Naive thymus-derived CD4-positive, alpha-beta T cell (primary cell): ENCODE measurements at regions of chr4 and their contacts with region 1.

Region 1: DNA sequence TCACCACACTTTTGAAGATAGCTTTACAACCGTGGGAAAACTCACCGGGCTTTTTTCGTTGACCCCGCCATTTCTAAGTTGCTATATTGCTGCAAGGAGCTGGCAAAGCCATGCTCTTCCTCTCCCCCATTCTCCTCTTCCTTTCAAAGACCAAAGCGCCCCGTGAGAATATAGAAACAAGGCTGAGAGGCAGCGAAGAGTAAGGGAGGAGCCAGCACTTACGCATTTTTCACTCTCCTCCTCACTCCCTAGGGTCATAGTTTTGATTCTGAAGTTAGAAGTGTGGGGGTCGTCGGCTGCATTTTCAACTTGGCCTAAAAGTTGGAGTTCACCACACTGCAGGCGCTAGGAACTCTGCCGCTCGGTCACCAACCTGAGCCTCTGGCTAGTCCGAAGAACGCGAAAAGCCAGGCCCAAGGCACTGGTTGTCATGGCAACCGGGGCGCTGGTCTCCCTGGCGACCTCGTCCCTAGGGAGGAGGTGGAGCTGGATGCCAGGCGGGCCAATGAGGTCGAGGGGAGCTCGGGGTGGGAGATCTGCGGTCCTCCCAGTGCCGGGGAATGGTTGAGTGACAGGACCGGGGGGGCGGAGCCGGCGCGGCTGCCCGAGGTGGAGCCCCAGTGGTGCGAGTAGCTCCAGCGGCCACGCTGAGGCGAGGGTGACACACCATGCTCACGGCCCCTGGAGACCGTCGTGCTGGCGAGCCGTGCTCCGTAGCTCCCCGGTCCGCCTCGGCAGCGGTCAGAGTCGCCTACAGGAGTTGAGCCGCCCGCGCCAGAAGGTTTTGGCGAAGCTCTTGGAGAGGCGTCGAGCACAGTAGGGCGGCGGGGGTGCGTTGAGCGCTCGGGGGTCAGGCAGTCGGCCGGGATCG is at the start of gene PTPN13:
- DNase-seq: peak in 6 of 9 donors; percentile 7 to 62 (median 16)
- ATAC-seq: peak; percentile 86
- H3K4me3 ChIP-seq: peak within 1 kb of the TSS; percentile 30
- H3K4me3 Mint-ChIP-seq: peak within 1 kb of the TSS; percentile 59 to 83 (median 79)
- H3K27ac ChIP-seq: no peak within 1 kb of the TSS
- H3K27ac Mint-ChIP-seq: no peak within 1 kb of the TSS
- H3K4me1 ChIP-seq: no peaks in the 10 kb centered on the region
- H3K4me1 Mint-ChIP-seq: peaks cover 5 to 30% (median 17%) of the 10 kb centered on the region in 7 donors
- H3K27me3 ChIP-seq: peaks cover 0 to 9% of the 10 kb centered on the region in 2 donors
- H3K27me3 Mint-ChIP-seq: peaks cover 46 to 62% (median 52%) of the 10 kb centered on the region in 5 donors
- total RNA-seq, gene PTPN13: 0.05 to 4.5 (median 0.21) TPM in 4 of 5 experiments, not detected in the other

Region 2: DNA sequence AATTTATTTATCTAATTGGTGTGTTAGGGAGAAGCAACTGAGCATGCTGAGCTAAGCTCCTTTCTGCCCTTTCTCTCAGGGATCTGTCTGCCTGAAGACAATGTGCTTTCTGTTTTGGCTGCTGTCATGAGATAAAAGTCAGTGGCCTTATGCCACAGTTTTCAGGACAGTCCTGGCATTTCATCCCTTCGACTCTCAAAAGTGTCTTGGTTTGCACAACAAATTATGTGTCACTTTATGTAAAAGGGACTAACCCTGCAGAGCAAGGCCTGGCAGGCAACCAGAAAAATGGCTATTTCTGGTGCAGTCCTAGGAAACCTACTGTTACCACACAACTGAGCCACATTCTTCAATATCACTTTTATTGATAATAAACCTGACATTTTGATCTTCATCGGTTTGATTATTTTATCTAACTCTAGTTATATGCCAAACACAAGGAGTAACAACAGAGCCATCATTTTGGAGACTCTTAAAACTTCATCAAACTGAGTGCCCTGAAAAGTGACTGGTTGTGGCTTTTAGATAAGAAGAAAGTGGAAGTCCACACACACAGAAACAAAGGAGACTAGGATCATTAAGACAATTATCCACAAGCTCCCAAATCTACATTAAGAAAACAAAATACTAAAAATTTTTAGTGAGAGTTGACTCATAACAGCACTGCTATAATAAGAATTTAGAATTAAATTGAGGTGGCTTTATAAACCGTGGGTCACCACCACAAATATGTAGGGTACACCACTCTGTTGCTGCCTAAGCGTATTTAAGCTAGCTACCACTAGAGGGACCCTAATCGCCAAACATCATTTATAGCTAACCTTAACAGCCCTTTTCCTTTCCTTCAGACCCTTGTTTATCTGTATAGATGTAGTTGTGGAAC is 95.7 kb before region 1 on chr4:
- CTCF ChIA-PET with region 1: no interaction called
- POLR2A ChIA-PET with region 1: no interaction called
- intact Hi-C with region 1: loop called in 1 of 2 experiments (anchors 5 kb)
- DNase-seq: peak in 4 of 9 donors; percentile 4 to 26 (median 18)
- ATAC-seq: peak; percentile 78
- H3K4me3 ChIP-seq: no peak overlapping the region
- H3K4me3 Mint-ChIP-seq: no peak overlapping the region
- H3K27ac ChIP-seq: no peak overlapping the region
- H3K27ac Mint-ChIP-seq: no peak overlapping the region
- H3K4me1 ChIP-seq: no peaks in the 10 kb centered on the region
- H3K4me1 Mint-ChIP-seq: peaks cover 0 to 13% (median 0%) of the 10 kb centered on the region in 7 donors
- H3K27me3 ChIP-seq: no peaks in the 10 kb centered on the region
- H3K27me3 Mint-ChIP-seq: peaks cover 9 to 21% (median 12%) of the 10 kb centered on the region in 5 donors

Region 3: DNA sequence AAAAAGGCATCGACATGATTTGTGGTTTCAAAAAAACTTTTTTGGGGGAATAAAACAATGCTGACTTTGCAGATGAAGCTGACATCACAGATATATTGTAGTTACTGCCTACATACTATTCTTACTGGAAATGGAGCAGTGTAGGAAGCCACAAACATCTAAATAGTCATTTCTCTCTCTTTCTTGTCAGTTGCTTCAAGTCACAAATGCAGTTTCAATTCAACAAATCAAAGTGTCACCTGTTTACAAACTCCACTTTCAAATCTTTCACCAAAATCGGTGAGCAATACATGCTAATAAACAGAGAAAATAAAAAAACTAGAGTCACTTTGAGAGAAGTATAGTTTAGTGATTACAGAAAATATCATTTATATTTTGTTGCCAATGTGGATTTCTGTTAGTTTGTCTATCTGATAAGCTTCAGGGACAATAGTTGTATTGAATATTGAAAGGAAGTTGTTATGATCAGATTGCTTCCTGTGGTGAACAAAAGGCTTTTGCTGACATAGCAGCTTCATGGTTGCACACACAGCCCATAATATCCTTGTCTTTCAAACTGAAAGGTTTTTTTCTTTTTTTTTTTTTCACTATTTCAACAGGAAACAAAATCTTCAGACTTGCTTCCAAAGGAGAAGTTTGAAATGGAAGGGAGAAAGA is 49.5 kb before region 1 on chr4:
- CTCF ChIA-PET with region 1: no interaction called
- POLR2A ChIA-PET with region 1: no interaction called
- intact Hi-C with region 1: loop called in 1 of 2 experiments (anchors 2 kb)
- DNase-seq: peak in 2 of 9 donors; percentile 9 to 21
- ATAC-seq: peak; percentile 45
- H3K4me3 ChIP-seq: no peak overlapping the region
- H3K4me3 Mint-ChIP-seq: peak overlapping the region in 3 of 10 donors; percentile 29 to 69 (median 68)
- H3K27ac ChIP-seq: no peak overlapping the region
- H3K27ac Mint-ChIP-seq: peak overlapping the region in 1 of 9 donors; percentile 93
- H3K4me1 ChIP-seq: no peaks in the 10 kb centered on the region
- H3K4me1 Mint-ChIP-seq: peaks cover 5 to 33% (median 13%) of the 10 kb centered on the region in 7 donors
- H3K27me3 ChIP-seq: no peaks in the 10 kb centered on the region
- H3K27me3 Mint-ChIP-seq: peaks cover 4 to 20% (median 15%) of the 10 kb centered on the region in 5 donors

Region 4: DNA sequence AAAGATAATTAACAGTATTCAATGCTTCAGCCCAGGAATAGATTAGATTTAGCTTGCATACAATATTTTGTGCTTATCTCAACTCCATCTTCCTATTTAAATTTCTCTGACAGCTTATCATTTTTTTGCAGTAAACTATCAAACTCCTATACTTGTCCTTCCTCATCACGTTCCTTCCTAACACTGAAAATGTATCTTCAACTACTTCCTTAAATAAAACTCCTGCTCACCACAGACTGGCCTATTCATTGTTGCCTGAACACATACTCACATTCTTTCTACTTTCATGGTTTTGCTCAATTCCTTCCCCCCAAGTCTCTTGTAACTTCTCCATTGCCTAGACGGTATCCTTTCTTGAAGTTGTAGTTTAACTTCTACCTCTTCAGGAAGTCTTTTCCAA is 28.3 kb before region 1 on chr4:
- CTCF ChIA-PET with region 1: no interaction called
- POLR2A ChIA-PET with region 1: no interaction called
- intact Hi-C with region 1: no loop called
- DNase-seq: no peak
- ATAC-seq: no peak
- H3K4me3 ChIP-seq: no peak overlapping the region
- H3K4me3 Mint-ChIP-seq: no peak overlapping the region
- H3K27ac ChIP-seq: no peak overlapping the region
- H3K27ac Mint-ChIP-seq: no peak overlapping the region
- H3K4me1 ChIP-seq: no peaks in the 10 kb centered on the region
- H3K4me1 Mint-ChIP-seq: peaks cover 0 to 4% (median 0%) of the 10 kb centered on the region in 7 donors
- H3K27me3 ChIP-seq: no peaks in the 10 kb centered on the region
- H3K27me3 Mint-ChIP-seq: peaks cover 0 to 17% (median 9%) of the 10 kb centered on the region in 5 donors

Region 5: GRCh38 chr4:87422104-87423052 is 828.5 kb after region 1 on chr4 and contains the start of gene NUDT9:
- CTCF ChIA-PET with region 1: no interaction called
- POLR2A ChIA-PET with region 1: no interaction called
- intact Hi-C with region 1: no loop called
- DNase-seq: peak; percentile 74 to 92 (median 89)
- ATAC-seq: peak; percentile 92
- H3K4me3 ChIP-seq: peak within 1 kb of the TSS; percentile 96
- H3K4me3 Mint-ChIP-seq: peak within 1 kb of the TSS; percentile 94 to 100 (median 98)
- H3K27ac ChIP-seq: peak within 1 kb of the TSS; percentile 85
- H3K27ac Mint-ChIP-seq: peak within 1 kb of the TSS; percentile 97 to 100 (median 99)
- H3K4me1 ChIP-seq: peaks cover 17% of the 10 kb centered on the region in 2 donors
- H3K4me1 Mint-ChIP-seq: peaks cover 14 to 59% (median 48%) of the 10 kb centered on the region in 7 donors
- H3K27me3 ChIP-seq: no peaks in the 10 kb centered on the region
- H3K27me3 Mint-ChIP-seq: no peaks in the 10 kb centered on the region
- total RNA-seq, gene NUDT9: 9.7 to 18.1 (median 10.5) TPM